Activated T-helper 2 cell treated with anti-CD3 and anti-CD28 coated beads, Interferon-gamma antibody, Interleukin-2, Interleukin-4, amounts not matched to agents 10 μg/mL and 5 μg/mL and 100 μg/mL, durations not matched to agents 14 hours and 24 hours and 36 hours (primary cell): ENCODE measurements at regions of chr7 and their contacts with region 1.

Region 1: GRCh38 chr7:4610768-4611467 is 71.2 kb upstream of the FOXK1 start:
- DNase-seq: peak; percentile 30
- H3K4me3 Mint-ChIP-seq: no peak overlapping the region
- H3K27ac Mint-ChIP-seq: no peak overlapping the region
- H3K4me1 Mint-ChIP-seq: peaks cover 9% of the 10 kb centered on the region
- H3K27me3 Mint-ChIP-seq: no peaks in the 10 kb centered on the region

Region 2: GRCh38 chr7:4683884-4684565 is 73.1 kb after region 1 on chr7:
- intact Hi-C with region 1: loop called (anchors 2 kb)
- DNase-seq: peak; percentile 26
- H3K4me3 Mint-ChIP-seq: peak overlapping the region; percentile 91
- H3K27ac Mint-ChIP-seq: peak overlapping the region; percentile 92
- H3K4me1 Mint-ChIP-seq: peaks cover 24% of the 10 kb centered on the region
- H3K27me3 Mint-ChIP-seq: no peaks in the 10 kb centered on the region

Region 3: DNA sequence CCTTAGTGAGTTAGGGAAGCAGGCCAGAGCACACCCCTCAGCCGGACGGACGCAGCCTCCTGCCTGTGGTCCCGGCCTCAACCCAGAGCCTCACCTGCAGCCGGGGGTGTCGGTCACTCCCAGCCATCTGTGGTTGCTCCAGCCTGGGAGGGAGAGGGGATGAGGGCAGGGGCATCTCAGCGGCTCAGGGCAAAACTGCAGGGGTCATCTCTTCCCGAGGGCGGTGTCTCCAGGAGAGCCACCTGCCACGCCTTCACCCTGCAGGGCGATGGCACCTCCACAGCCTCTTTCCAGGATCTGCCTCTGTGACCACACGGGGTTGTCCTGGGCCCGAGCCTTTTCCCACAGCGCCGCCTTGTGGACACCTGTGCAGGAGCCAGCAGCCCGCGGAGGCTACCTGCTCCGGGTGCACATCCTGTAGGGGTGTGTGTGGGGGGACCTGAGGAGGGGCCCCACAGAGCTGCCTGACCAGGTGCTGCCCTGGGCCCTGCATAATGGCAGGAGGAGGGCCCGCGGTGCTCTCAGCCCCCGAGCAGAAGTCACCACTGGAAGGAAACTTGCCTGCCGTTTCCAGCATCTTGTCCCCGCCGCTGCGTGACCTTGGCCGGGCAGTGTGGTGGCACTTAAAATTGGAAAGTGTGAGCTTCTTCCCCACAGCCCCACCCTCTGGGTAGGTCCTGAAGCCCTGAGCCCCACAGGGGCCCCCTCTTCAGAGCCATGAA is 143.0 kb after region 1 on chr7:
- intact Hi-C with region 1: loop called (anchors 1 kb)
- DNase-seq: peak; percentile 74
- H3K4me3 Mint-ChIP-seq: no peak overlapping the region
- H3K27ac Mint-ChIP-seq: no peak overlapping the region
- H3K4me1 Mint-ChIP-seq: peaks cover 10% of the 10 kb centered on the region
- H3K27me3 Mint-ChIP-seq: no peaks in the 10 kb centered on the region